Activated naive CD4-positive, alpha-beta T cell treated with anti-CD3 and anti-CD28 coated beads, Interleukin-2, amount 10 ng/mL, durations not matched to agents 7 days and 5 days (primary cell): ENCODE measurements at regions of chr12 and their contacts with region 1.

Region 1: GRCh38 chr12:12786716-12787601 is 1.5 kb downstream of the APOLD1 start:
- DNase-seq: peak; percentile 77
- H3K4me3 Mint-ChIP-seq: peak overlapping the region; percentile 71
- H3K27ac Mint-ChIP-seq: peak overlapping the region; percentile 72
- H3K4me1 Mint-ChIP-seq: peaks cover 42% of the 10 kb centered on the region
- H3K27me3 Mint-ChIP-seq: peaks cover 3% of the 10 kb centered on the region

Region 2: DNA sequence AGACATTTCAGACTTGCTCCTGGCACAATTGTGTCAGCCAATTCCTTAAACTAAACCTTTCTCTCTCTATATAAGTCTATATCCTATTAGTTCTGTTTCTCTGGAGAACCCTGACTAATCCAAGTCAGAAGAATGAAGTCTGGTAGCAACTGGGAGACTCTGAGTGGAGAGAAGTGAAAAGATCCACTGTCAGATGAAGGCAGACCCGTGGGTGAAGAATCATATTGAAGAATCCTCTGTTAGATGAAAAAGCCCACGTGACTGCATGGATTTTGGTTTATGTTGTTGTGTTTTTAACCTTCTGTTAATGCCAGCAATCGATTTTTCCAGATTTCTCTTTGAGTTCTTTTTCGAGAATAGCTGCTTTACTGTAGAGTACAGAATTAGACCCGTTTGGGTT is 31.0 kb before region 1 on chr12:
- CTCF ChIA-PET with region 1: no interaction called
- DNase-seq: no peak
- H3K4me3 Mint-ChIP-seq: no peak overlapping the region
- H3K27ac Mint-ChIP-seq: no peak overlapping the region
- H3K4me1 Mint-ChIP-seq: no peaks in the 10 kb centered on the region
- H3K27me3 Mint-ChIP-seq: no peaks in the 10 kb centered on the region

Region 3: DNA sequence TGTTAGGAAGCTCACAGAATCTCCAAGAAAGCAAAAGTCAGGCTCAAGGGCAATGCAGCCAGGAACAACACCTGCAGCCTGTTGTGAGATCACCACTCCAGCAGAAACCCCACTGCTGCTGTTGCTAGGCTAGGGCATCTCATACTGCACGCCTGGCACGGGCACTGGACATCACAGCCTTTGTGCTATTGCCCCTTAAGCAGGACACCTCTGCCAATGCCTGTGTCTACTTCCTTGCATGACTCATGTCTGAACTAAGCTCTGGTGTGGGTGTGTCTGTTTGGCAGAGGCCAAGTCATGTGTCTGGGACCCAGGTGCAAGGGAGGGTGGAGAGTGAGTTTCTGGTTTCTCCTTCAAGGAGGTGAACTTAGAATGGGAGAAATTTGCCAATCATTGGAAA is 16.2 kb after region 1 on chr12:
- CTCF ChIA-PET with region 1: interaction called, 12 read pairs
- DNase-seq: peak; percentile 68
- H3K4me3 Mint-ChIP-seq: peak overlapping the region; percentile 34
- H3K27ac Mint-ChIP-seq: peak overlapping the region; percentile 73
- H3K4me1 Mint-ChIP-seq: peaks cover 62% of the 10 kb centered on the region
- H3K27me3 Mint-ChIP-seq: no peaks in the 10 kb centered on the region

Region 4: DNA sequence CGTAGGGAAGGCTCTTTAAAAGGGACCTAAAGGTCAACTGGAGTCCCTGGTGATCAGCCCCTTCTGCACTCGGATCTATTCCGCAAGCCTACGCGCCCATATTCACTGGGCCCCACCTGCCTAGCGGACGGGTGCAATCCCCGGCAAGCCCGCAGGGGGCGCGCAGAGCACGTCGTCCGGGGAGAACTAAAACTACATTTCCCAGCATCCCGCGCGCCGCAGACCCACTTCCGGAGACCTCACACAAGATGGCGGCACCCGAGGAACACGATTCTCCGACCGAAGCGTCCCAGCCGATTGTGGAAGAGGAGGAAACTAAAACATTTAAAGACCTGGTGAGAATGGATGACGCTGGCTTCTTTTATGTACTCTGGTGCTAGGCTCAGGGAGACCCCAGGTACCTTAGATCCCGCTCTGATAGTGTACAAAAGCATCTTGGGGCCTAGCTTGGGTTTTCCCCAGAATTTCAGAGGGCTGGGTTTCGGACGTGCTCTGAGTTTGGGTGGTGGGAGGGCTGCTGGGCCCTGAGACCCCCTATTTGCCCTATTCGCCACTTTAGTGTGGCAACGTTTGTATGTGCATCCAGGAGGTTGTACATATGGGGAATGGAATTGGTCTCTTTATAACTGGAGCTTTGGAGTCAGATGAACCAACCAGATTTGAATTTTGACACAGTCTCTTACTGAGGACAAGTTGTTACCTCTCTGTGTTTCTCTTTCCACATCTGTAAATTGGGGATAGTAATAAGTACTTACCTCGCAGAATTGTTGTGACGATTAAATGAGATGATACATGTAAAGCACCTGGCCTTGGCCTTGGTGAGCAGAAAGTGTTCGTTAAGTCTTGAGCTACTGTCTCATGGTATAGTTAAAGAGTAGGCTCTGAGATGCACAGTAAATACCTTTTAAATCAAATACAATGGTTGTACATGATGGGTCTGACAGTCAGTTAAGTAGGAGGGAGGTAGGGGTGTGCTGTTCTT is 26.5 kb after region 1 on chr12 and contains the start of gene DDX47:
- CTCF ChIA-PET with region 1: interaction called, 21 read pairs
- DNase-seq: peak; percentile 98
- H3K4me3 Mint-ChIP-seq: peak within 1 kb of the TSS; percentile 83
- H3K27ac Mint-ChIP-seq: peak within 1 kb of the TSS; percentile 83
- H3K4me1 Mint-ChIP-seq: peaks cover 78% of the 10 kb centered on the region
- H3K27me3 Mint-ChIP-seq: no peaks in the 10 kb centered on the region

Region 5: GRCh38 chr12:12837025-12837872 is 50.3 kb after region 1 on chr12:
- CTCF ChIA-PET with region 1: interaction called, 29 read pairs
- DNase-seq: peak; percentile 54
- H3K4me3 Mint-ChIP-seq: no peak overlapping the region
- H3K27ac Mint-ChIP-seq: peak overlapping the region; percentile 69
- H3K4me1 Mint-ChIP-seq: peaks cover 33% of the 10 kb centered on the region
- H3K27me3 Mint-ChIP-seq: no peaks in the 10 kb centered on the region

Region 6: GRCh38 chr12:12872139-12872881 is 85.4 kb after region 1 on chr12:
- CTCF ChIA-PET with region 1: no interaction called
- DNase-seq: no peak
- H3K4me3 Mint-ChIP-seq: no peak overlapping the region
- H3K27ac Mint-ChIP-seq: no peak overlapping the region
- H3K4me1 Mint-ChIP-seq: no peaks in the 10 kb centered on the region
- H3K27me3 Mint-ChIP-seq: no peaks in the 10 kb centered on the region

Region 7: DNA sequence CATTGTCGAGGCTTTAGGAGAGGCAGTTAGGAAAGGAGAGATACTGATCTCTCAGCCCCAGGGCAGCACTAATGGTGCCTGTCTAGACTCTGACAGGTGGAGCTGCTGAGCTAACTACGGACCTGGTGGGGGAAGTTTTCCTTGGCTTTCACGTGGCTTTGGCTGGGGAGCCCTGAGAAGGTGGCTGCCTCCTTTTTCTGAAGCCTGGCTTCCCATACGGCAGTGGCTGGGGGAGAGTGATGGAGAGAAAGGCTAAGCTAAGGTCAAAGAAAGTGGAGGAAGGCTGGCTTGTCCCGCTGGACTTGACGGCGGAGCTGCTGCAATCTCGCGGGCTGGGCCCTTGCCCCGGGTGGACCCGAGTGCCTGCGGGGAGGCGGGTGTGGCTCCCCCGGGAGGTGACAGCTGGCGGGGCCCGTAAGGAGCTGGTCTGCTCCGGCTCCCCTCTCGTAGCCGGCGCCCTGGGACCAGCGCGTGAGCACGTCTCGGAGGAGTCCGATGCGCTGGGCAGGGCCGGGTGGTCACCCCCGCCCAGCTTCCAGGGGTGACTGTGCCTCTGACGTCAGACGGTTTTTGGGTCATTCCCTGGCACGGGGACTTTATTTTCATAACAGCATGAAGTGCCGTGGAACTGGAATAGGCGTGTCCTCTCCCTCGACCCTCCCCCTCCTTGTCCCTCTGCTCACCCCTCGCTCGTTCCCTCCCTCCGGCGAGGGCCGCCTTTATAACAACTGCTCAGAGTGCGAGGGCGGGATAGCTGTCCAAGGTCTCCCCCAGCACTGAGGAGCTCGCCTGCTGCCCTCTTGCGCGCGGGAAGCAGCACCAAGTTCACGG is 104.1 kb after region 1 on chr12 and contains the start of gene GPRC5A:
- CTCF ChIA-PET with region 1: interaction called, 16 read pairs
- DNase-seq: peak; percentile 60
- H3K4me3 Mint-ChIP-seq: peak within 1 kb of the TSS; percentile 69
- H3K27ac Mint-ChIP-seq: no peak within 1 kb of the TSS
- H3K4me1 Mint-ChIP-seq: peaks cover 15% of the 10 kb centered on the region
- H3K27me3 Mint-ChIP-seq: peaks cover 50% of the 10 kb centered on the region

Region 8: GRCh38 chr12:12916135-12916944 is 129.4 kb after region 1 on chr12:
- CTCF ChIA-PET with region 1: interaction called, 13 read pairs
- DNase-seq: peak; percentile 91
- H3K4me3 Mint-ChIP-seq: no peak overlapping the region
- H3K27ac Mint-ChIP-seq: no peak overlapping the region
- H3K4me1 Mint-ChIP-seq: peaks cover 10% of the 10 kb centered on the region
- H3K27me3 Mint-ChIP-seq: peaks cover 46% of the 10 kb centered on the region

Region 9: DNA sequence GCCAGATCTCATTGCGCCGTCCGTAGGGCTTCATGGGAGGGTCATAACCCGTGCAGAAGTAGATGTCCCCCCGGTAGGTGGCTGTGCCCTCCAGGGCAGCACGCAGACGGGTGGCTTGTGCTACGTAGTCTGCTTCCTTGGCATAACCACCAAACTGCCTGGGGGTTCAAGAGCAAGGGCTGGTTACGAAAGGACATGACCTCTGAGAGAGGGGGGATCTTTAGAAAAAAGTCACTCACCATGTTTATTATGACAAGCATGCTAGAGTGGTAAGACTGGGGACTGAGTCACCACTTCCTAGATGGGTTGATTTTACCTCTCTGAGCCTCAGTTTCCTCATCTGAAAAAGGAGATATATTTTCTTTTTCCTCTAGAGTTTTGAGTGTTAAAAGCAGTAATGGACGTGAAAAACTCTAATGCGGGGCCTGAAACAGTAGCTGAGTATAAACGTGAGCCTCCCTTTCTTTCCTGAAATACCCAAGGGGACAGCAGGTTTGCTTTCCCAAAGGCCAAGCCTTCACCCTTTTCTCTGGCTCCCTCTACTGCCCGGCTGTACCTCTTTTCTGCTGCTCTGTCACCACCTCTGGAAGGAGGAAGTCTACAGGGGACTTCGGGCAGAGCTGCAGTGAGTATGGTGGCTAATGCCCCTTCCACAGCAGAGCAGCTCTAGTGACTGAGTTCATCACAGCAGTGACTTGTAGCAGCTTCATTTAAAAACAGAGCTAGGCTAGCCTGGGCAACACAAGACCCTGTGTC is 188.5 kb after region 1 on chr12:
- CTCF ChIA-PET with region 1: interaction called, 10 read pairs
- DNase-seq: peak; percentile 36
- H3K4me3 Mint-ChIP-seq: no peak overlapping the region
- H3K27ac Mint-ChIP-seq: no peak overlapping the region
- H3K4me1 Mint-ChIP-seq: no peaks in the 10 kb centered on the region
- H3K27me3 Mint-ChIP-seq: no peaks in the 10 kb centered on the region